ENCODE measurements at regions of chr10 and their contacts with region 1.

Region 1: DNA sequence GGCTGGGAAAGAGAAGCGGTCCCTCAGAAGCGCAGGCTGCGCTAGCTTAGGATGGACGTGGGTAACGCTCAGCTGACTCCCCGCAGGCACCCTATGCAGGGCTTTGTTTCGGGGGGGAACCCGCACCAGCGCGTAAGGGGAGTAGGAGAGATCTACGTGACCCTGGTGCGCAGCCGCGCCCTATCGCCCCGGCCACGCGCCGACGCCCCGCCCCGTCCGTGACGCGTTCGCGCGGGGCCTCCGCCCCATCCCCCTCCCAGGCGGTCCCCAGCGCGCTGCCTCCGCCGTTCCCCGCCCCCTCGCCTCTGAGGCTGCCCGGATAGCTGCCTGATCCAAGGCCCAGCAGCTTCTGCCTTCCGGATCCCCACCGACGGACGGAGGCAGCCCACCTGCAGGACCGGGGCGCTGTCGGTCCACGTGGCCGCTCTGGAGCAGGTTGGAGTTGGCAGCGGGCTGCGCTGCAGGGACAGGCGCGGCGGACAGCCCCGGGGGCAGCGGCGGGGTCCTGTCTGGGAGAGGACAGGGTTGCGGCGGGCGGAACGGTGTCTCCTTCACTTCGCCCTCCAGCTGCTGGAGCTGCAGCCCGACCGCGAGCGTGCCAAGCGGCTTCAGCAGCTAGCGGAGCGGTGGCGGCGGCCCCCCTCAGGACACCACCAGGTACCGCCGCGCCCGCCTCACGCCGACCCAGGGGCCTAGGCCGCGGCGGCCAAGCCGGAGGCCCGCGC is at the start of gene VDAC2:
- DNase-seq: peak; percentile 92 to 97 (median 97)
- ATAC-seq: peak; percentile 98
- H3K4me3 ChIP-seq: peak within 1 kb of the TSS; percentile 78
- H3K27ac ChIP-seq: peak within 1 kb of the TSS; percentile 98
- H3K4me1 ChIP-seq: peaks cover 2% of the 10 kb centered on the region
- H3K27me3 ChIP-seq: no peaks in the 10 kb centered on the region
- total RNA-seq, gene VDAC2: 362 to 389 (median 368) TPM

Region 2: DNA sequence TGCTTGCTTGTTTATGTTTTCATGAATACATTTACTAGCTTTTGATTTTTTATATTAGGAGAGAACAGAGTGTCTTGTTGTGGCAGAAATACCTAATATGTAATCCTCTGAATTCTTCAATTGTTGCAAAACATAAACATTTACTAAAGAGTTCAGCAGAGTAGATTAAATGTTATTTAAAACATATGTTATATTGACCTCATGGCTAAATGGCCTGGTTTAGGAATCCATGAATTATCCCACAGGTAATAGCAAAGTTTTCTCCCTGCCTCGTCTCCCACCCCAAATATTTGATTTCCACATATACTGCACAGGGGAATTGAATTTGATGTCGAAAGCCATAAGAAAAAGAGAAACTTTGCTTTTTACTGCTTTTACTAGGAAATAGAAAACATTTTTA is 947.6 kb before region 1 on chr10:
- intact Hi-C with region 1: no loop called
- DNase-seq: no peak
- ATAC-seq: no peak
- H3K4me3 ChIP-seq: no peak overlapping the region
- H3K27ac ChIP-seq: no peak overlapping the region
- H3K4me1 ChIP-seq: no peaks in the 10 kb centered on the region
- H3K27me3 ChIP-seq: no peaks in the 10 kb centered on the region

Region 3: DNA sequence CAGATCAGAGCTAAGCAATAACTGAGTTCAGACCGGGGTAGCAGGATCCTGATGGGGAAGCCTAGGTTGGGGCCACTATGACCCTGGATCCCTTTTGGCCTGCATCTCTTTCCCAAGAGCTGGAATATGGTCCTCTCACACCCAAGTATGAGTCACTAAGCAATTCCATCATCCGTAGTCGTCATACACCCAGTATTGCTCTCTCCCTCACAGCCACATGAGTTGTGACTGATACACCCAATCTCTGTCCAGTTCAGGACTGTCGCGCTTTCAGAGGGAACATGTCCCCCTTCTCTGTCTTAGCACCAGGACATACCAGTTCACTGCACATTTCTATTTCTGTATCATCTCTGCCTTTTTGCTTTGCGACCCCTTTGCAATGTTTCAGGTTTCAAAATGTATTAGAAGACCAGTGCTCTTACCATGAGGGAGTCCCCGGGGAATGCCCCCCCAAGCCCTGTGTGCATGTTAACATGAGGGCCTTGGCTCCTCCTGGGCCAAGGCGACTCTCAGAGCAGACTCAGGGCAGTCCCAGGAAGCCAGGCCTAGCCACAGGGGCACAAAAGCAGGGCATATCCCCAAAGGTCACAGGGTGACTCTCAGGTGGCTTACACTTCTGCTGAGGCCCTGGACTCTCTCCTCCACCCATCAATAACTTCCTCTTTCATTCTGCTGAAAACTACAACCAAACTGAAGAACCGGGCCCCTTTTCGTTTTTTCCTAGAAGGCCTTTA is 174.3 kb before region 1 on chr10:
- intact Hi-C with region 1: no loop called
- DNase-seq: no peak
- ATAC-seq: peak in 1 of 2 donors; percentile 33
- H3K4me3 ChIP-seq: no peak overlapping the region
- H3K27ac ChIP-seq: no peak overlapping the region
- H3K4me1 ChIP-seq: peaks cover 4% of the 10 kb centered on the region
- H3K27me3 ChIP-seq: no peaks in the 10 kb centered on the region

Region 4: GRCh38 chr10:75111367-75111906 is 99.0 kb before region 1 on chr10 and contains the start of gene SAMD8:
- intact Hi-C with region 1: loop called in 2 of 4 experiments (anchors 5 to 10 kb)
- DNase-seq: peak; percentile 98 to 99 (median 99)
- ATAC-seq: peak; percentile 91 to 92
- H3K4me3 ChIP-seq: peak within 1 kb of the TSS; percentile 86
- H3K27ac ChIP-seq: peak within 1 kb of the TSS; percentile 97
- H3K4me1 ChIP-seq: peaks cover 3% of the 10 kb centered on the region
- H3K27me3 ChIP-seq: no peaks in the 10 kb centered on the region
- total RNA-seq, gene SAMD8: 21.4 to 26.7 (median 24.5) TPM

Region 5: GRCh38 chr10:75226656-75227055 is 16.2 kb after region 1 on chr10:
- intact Hi-C with region 1: loop called in 1 of 4 experiments (anchors 2 kb)
- DNase-seq: no peak
- ATAC-seq: no peak
- H3K4me3 ChIP-seq: no peak overlapping the region
- H3K27ac ChIP-seq: peak overlapping the region; percentile 94
- H3K4me1 ChIP-seq: peaks cover 24% of the 10 kb centered on the region
- H3K27me3 ChIP-seq: no peaks in the 10 kb centered on the region

Measured in right cardiac atrium (tissue), 5 donors.